Endothelial cell of umbilical vein (primary cell): ENCODE measurements at regions of chr1 and their contacts with region 1.

Region 1: DNA sequence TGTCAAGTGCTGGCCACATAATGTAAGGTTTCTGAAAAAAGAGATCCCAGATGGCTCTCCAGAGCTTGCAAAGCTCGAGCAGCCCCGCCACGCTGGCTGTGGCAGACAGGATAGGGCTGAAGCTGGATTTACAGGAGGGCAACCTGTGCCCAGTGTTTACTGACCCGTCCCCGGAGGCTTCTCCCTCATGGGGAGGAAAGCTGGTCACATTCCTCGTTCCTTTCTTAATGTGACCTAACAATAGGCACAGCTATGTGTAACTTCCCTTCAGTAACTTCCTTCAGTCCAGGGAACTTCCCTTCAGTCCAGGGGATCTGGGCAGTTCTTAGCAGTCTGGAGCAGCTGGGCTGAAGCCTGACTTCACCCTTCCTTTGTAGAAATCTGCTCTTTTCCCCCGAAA is 7.7 kb downstream of the SLFNL1 start:
- DNase-seq: peak; percentile 95
- H3K4me3 ChIP-seq: no peak overlapping the region
- H3K27ac ChIP-seq: peak overlapping the region; percentile 95
- H3K4me1 ChIP-seq: peaks cover 30% of the 10 kb centered on the region
- H3K27me3 ChIP-seq: no peaks in the 10 kb centered on the region
- CTCF ChIP-seq: no peak
- POLR2A ChIP-seq: peak; percentile 82

Region 2: DNA sequence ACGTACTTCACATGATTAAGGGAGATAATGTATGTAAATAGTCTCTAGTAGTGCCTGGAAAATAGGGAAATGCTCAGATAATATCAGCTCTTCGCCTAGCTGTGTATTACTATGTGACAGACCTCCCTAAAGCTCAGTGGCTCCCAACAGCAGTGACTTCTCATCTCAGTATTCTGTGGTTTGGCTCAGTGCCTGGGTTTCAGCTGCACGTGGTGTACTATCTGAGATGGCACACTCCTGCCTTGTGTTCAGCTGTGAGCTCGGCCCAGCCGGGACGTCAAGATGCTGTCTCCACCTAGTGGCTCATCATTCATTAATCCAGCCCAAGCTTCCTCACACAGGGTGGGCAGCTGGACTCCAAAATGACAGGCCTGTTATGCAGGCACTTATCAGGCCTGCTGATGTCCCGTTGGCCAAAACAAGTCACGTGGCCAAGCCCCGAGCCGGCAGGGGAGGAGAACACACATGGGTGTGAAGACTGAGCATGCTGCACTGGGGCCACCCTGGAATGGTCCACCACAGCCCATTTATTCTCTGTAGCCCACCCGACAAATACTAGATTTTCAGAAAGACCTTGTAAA is 10.1 kb before region 1 on chr1:
- CTCF ChIA-PET with region 1: interaction called, 21 read pairs
- POLR2A ChIA-PET with region 1: interaction called, 5 read pairs
- dilution Hi-C with region 1: no loop called
- intact Hi-C with region 1: loop called (anchors 1 kb)
- DNase-seq: peak; percentile 95
- H3K4me3 ChIP-seq: no peak overlapping the region
- H3K27ac ChIP-seq: peak overlapping the region; percentile 44
- H3K4me1 ChIP-seq: peaks cover 10% of the 10 kb centered on the region
- H3K27me3 ChIP-seq: no peaks in the 10 kb centered on the region
- CTCF ChIP-seq: peak; percentile 60 to 67
- POLR2A ChIP-seq: no peak

Region 3: GRCh38 chr1:41045740-41046139 is 31.9 kb after region 1 on chr1:
- CTCF ChIA-PET with region 1: interaction called, 3 read pairs
- POLR2A ChIA-PET with region 1: no interaction called
- dilution Hi-C with region 1: no loop called
- intact Hi-C with region 1: loop called (anchors 2 kb)
- DNase-seq: peak; percentile 94
- H3K4me3 ChIP-seq: no peak overlapping the region
- H3K27ac ChIP-seq: peak overlapping the region; percentile 53
- H3K4me1 ChIP-seq: peaks cover 32% of the 10 kb centered on the region
- H3K27me3 ChIP-seq: no peaks in the 10 kb centered on the region
- CTCF ChIP-seq: no peak
- POLR2A ChIP-seq: no peak

Region 4: DNA sequence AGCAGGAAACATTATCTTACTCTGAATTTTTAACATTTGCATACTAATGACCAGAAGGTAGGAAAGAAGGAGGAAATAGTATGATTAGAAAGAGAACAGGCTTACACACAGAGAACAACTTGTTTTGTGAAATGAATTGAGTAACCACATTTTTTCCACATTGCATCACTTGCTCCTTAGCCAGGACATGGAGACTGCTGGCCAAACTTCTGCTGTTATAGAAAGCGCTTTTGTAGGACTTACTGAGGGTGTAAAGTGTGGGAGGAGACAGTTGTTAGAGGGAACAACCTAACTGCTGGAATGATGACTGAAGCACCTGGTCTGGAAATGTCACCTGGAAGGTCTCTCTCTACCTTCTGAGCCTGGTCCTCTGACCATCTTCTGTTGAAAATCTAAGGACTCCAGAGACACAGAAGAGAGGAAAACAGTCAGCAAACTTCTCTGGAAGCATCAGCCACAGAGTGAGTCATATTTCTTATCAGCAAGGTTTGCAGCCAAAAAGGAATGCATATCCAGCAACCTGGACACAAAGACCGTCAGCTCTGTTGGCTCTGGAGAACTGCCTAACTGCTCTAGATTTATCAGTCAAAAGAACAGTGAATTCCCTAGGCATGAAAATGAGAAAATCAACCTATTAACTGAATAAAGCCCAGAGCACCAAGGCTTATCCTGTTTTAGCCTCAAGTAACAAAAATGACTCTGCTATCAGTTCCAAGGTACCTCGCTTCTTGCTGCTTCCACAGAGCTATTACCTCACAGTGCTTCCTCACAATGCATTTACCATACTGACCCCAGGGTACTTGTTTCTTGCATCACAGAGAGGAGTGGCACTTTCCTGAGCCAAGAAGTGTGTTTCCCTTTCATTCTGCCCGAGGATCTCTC is 95.8 kb after region 1 on chr1:
- CTCF ChIA-PET with region 1: no interaction called
- POLR2A ChIA-PET with region 1: no interaction called
- dilution Hi-C with region 1: no loop called
- intact Hi-C with region 1: loop called (anchors 2 kb)
- DNase-seq: peak; percentile 95
- H3K4me3 ChIP-seq: peak overlapping the region in 1 of 3 experiments; percentile 59
- H3K27ac ChIP-seq: peak overlapping the region; percentile 95
- H3K4me1 ChIP-seq: peaks cover 27% of the 10 kb centered on the region
- H3K27me3 ChIP-seq: no peaks in the 10 kb centered on the region
- CTCF ChIP-seq: no peak
- POLR2A ChIP-seq: no peak